ENCODE measurements at regions of chr17 and their contacts with region 1.

Region 1: GRCh38 chr17:66348584-66349165 is 46.3 kb downstream of the PRKCA start:
- DNase-seq: peak; percentile 58
- H3K4me3 Mint-ChIP-seq: no peak overlapping the region
- H3K27ac Mint-ChIP-seq: peak overlapping the region; percentile 47
- H3K4me1 Mint-ChIP-seq: peaks cover 78% of the 10 kb centered on the region
- H3K27me3 Mint-ChIP-seq: no peaks in the 10 kb centered on the region

Region 2: DNA sequence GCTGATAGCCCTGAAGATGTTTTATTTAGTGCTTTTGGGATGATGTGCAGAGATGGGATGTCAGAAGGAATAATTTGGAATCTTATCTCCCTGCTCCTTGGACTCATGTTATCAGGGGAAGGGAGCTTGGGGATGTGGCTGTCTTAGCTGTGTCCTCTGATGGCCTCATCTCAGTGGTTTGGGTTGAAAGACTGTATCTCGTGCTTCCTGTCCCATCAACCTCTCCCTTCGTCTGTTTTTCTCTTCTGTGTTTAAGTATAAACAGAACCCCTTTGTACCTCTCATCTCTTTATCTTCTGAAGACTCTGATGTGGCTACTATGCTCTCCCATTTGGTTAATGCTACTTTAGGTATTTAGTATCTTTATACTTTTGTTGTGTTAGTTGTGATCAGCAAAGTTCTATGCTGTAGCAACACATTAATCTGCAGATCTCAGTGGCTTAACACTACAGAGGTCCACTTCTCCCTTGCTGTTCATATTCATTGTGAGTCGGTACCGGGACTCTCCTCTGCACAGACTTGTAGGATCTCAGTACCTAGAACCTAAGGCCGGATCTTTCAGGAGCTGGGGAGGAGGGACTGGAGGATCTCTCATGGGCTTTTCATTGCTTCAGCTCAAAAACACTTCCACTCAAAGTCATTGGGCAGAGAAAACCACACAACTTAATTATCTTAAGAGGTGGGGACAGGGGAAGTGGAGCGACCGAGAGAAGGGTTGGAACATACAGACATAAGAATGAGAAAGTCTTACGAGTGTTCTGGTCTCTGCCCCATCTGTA is 17.4 kb before region 1 on chr17:
- CTCF ChIA-PET with region 1: no interaction called
- POLR2A ChIA-PET with region 1: no interaction called
- intact Hi-C with region 1: loop called (anchors 2 kb)
- DNase-seq: peak; percentile 36
- H3K4me3 Mint-ChIP-seq: peak overlapping the region; percentile 70
- H3K27ac Mint-ChIP-seq: peak overlapping the region; percentile 92
- H3K4me1 Mint-ChIP-seq: peaks cover 79% of the 10 kb centered on the region
- H3K27me3 Mint-ChIP-seq: no peaks in the 10 kb centered on the region

Measured in activated CD4-positive, alpha-beta memory T cell treated with anti-CD3 and anti-CD28 coated beads for 36 hours (primary cell).